ENCODE measurements at regions of chr16 and their contacts with region 1.

Region 1: GRCh38 chr16:4271176-4272066 is 1.4 kb downstream of the TFAP4 start:
- DNase-seq: peak; percentile 86
- ATAC-seq: peak; percentile 77
- H3K4me3 ChIP-seq: peak overlapping the region; percentile 68 to 84
- H3K27ac ChIP-seq: peak overlapping the region; percentile 91
- H3K4me1 ChIP-seq: peaks cover 8 to 34% of the 10 kb centered on the region in 2 experiments; a peak in 3 of 4 replicates
- H3K27me3 ChIP-seq: no peaks in the 10 kb centered on the region
- CTCF ChIP-seq: no peak
- POLR2A ChIP-seq: peak; percentile 59
- RAD21 ChIP-seq: no peak

Region 2: GRCh38 chr16:4111748-4112696 is 159.4 kb before region 1 on chr16:
- CTCF ChIA-PET with region 1: no interaction called
- POLR2A ChIA-PET with region 1: no interaction called
- RAD21 ChIA-PET with region 1: no interaction called
- intact Hi-C with region 1: no loop called
- DNase-seq: no peak
- ATAC-seq: no peak
- H3K4me3 ChIP-seq: no peak overlapping the region
- H3K27ac ChIP-seq: no peak overlapping the region
- H3K4me1 ChIP-seq: peaks cover 3 to 4% of the 10 kb centered on the region in 2 experiments
- H3K27me3 ChIP-seq: no peaks in the 10 kb centered on the region
- CTCF ChIP-seq: no peak
- POLR2A ChIP-seq: no peak
- RAD21 ChIP-seq: no peak

Region 3: GRCh38 chr16:4232541-4233386 is 38.7 kb before region 1 on chr16:
- CTCF ChIA-PET with region 1: no interaction called
- POLR2A ChIA-PET with region 1: no interaction called
- RAD21 ChIA-PET with region 1: no interaction called
- intact Hi-C with region 1: no loop called
- DNase-seq: no peak
- ATAC-seq: no peak
- H3K4me3 ChIP-seq: no peak overlapping the region
- H3K27ac ChIP-seq: no peak overlapping the region
- H3K4me1 ChIP-seq: no peaks in the 10 kb centered on the region
- H3K27me3 ChIP-seq: no peaks in the 10 kb centered on the region
- CTCF ChIP-seq: no peak
- POLR2A ChIP-seq: no peak
- RAD21 ChIP-seq: no peak; the same call in 1 of the 2 replicates

Region 4: GRCh38 chr16:4288148-4288921 is 16.9 kb after region 1 on chr16:
- CTCF ChIA-PET with region 1: interaction called, 21 read pairs
- POLR2A ChIA-PET with region 1: interaction called, 3 read pairs
- RAD21 ChIA-PET with region 1: no interaction called
- intact Hi-C with region 1: no loop called
- DNase-seq: no peak
- ATAC-seq: peak; percentile 85
- H3K4me3 ChIP-seq: peak overlapping the region in 1 of 2 experiments; percentile 20; a peak in 2 of 4 replicates
- H3K27ac ChIP-seq: no peak overlapping the region; the same call in 1 of the 2 replicates
- H3K4me1 ChIP-seq: peaks cover 48 to 75% of the 10 kb centered on the region in 2 experiments
- H3K27me3 ChIP-seq: no peaks in the 10 kb centered on the region
- CTCF ChIP-seq: peak; percentile 88 to 99 (median 98)
- POLR2A ChIP-seq: no peak
- RAD21 ChIP-seq: peak; percentile 95

Region 5: DNA sequence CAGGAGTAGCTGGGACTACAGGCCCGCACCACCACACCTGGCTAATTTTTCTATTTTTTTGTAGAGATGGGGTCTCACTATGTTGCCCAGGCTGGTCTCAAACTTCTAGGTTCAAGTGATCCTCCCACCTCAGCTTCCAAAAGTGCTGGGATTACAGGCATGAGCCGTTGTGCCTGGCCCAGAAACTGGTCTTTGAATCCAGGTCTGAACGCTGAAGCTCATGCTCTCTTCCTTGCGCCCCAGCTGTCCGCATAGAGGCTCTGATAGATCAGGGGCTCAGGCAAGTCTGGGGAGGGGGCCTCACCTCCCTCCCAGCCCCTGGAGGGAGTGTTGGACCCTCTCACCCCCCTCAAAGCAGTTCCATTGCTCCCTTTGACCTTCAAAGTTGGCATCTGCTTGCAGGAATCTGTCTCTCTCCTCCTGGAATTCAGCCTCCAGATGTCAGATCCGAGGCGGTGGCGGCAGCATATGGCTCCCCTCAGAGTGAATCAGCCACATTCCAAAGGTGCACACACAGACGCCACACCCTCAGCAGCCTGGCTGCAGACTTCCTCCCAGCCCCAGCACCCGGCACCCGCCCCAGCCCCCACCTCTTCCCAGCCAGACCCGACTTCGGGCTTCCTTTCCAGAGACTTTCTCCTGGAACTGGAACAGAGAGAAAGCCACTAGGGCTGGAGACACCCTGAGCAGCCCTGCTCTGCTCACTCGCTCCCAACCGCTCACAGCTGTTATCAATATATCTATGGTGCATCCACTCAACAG is 27.5 kb after region 1 on chr16:
- CTCF ChIA-PET with region 1: interaction called, 10 read pairs
- POLR2A ChIA-PET with region 1: interaction called, 5 read pairs
- RAD21 ChIA-PET with region 1: interaction called in 1 of 2 experiments, 4 read pairs
- intact Hi-C with region 1: no loop called
- DNase-seq: peak; percentile 80
- ATAC-seq: peak; percentile 96
- H3K4me3 ChIP-seq: peak overlapping the region; percentile 28 to 44
- H3K27ac ChIP-seq: peak overlapping the region; percentile 99
- H3K4me1 ChIP-seq: peaks cover 38 to 57% of the 10 kb centered on the region in 2 experiments
- H3K27me3 ChIP-seq: no peaks in the 10 kb centered on the region
- CTCF ChIP-seq: no peak
- POLR2A ChIP-seq: no peak
- RAD21 ChIP-seq: no peak

Region 6: GRCh38 chr16:4307215-4308037 is 36.0 kb after region 1 on chr16:
- CTCF ChIA-PET with region 1: interaction called, 37 read pairs
- POLR2A ChIA-PET with region 1: interaction called, 4 read pairs
- RAD21 ChIA-PET with region 1: no interaction called
- intact Hi-C with region 1: no loop called
- DNase-seq: peak; percentile 92
- ATAC-seq: peak; percentile 89
- H3K4me3 ChIP-seq: peak overlapping the region; percentile 63 to 80
- H3K27ac ChIP-seq: peak overlapping the region; percentile 45
- H3K4me1 ChIP-seq: peaks cover 20 to 44% of the 10 kb centered on the region in 2 experiments
- H3K27me3 ChIP-seq: no peaks in the 10 kb centered on the region
- CTCF ChIP-seq: no peak
- POLR2A ChIP-seq: peak; percentile 27
- RAD21 ChIP-seq: no peak

Measured in HCT116 (cell line).